ENCODE measurements at regions of chr18 and their contacts with region 1.

Region 1: DNA sequence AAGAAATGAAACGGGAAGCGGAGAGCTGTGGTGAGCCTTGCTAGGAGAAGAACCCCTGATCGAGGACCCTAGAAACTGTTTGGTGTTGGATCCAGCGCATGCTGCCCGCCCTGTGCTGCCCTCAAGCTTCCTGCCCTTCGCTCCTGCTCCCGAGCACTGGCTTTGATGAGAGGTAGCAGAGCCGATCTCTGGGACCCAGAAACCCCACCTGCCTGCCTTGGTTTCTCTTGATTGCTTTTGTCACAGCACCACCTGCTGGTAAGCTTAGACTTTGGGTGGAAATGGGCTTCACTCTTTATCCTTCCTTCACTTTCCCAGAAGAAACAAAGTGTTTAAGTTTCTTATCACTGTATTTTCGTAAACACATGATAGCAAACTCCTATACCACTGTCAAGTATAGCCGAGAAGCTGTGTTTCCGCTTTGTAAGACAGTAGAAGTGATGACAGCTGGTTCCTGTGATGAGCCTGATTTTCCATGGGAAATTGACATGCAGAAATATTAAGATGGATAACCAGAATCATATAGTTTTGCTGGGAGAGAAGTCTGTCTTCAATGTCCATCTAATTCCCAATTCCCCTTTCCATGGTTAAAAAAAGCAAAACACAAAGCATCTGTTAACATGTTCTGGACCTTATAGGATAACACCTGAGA is 267.4 kb downstream of the PHLPP1 start:
- DNase-seq: peak in 1 of 3 donors; percentile 75
- ATAC-seq: peak; percentile 61
- H3K4me3 ChIP-seq: no peak overlapping the region
- H3K4me1 ChIP-seq: no peaks in the 10 kb centered on the region
- CTCF ChIP-seq: peak; percentile 36

Region 2: GRCh38 chr18:62584241-62585120 is 398.2 kb before region 1 on chr18:
- intact Hi-C with region 1: loop called (anchors 5 to 10 kb)
- DNase-seq: peak; percentile 75 to 94 (median 89)
- ATAC-seq: peak; percentile 95
- H3K4me3 ChIP-seq: no peak overlapping the region
- H3K4me1 ChIP-seq: peaks cover 5% of the 10 kb centered on the region
- CTCF ChIP-seq: peak; percentile 82

Region 3: DNA sequence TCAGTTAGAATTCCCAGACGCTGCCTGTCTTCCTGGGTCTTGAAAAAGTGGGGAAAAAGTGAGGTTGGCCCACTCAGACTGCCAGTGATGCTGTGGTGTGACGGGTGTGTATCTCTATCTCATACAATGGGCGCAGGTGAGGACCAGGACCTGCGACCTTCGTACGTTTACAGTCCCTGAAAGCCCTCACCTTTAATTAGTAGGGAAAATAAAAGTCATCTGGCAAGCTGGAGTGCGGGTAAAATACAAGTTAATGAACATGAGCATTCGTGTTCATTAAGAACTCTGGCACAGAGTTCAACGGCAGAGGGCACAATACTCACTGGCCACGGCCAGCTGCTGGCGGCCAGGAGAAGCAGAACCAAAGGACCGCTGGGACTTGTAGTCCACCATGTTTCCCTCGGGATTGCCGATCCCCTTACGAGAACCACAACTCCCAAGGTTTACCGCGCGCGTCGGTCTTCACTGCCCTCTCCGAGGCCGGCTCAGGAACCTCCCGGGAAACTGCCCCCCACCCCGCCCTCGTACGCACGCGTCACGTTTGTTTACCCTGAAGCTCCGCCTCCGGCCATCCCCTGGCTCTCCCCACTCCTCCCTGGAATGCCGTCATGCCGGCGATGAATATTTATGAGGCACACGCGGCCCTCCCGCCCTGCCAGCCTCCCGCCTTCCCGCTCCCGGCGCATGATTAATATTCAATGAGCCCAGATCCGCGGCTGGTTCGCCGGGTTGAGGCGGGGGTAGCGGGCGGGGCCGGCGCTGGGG is 267.9 kb before region 1 on chr18:
- intact Hi-C with region 1: loop called in 1 of 2 experiments (anchors 10 kb)
- DNase-seq: peak; percentile 99 to 100 (median 99)
- ATAC-seq: peak; percentile 89
- H3K4me3 ChIP-seq: peak overlapping the region; percentile 57
- H3K4me1 ChIP-seq: peaks cover 21% of the 10 kb centered on the region
- CTCF ChIP-seq: no peak

Region 4: GRCh38 chr18:63216516-63217311 is 234.0 kb after region 1 on chr18:
- intact Hi-C with region 1: no loop called
- DNase-seq: no peak
- ATAC-seq: peak; percentile 58
- H3K4me3 ChIP-seq: no peak overlapping the region
- H3K4me1 ChIP-seq: peaks cover 11% of the 10 kb centered on the region
- CTCF ChIP-seq: no peak

Region 5: GRCh38 chr18:63405986-63406385 is 423.3 kb after region 1 on chr18:
- intact Hi-C with region 1: no loop called
- DNase-seq: no peak
- ATAC-seq: no peak
- H3K4me3 ChIP-seq: no peak overlapping the region
- H3K4me1 ChIP-seq: peaks cover 4% of the 10 kb centered on the region
- CTCF ChIP-seq: no peak